ENCODE measurements at regions of chr4 and their contacts with region 1.

Region 1: DNA sequence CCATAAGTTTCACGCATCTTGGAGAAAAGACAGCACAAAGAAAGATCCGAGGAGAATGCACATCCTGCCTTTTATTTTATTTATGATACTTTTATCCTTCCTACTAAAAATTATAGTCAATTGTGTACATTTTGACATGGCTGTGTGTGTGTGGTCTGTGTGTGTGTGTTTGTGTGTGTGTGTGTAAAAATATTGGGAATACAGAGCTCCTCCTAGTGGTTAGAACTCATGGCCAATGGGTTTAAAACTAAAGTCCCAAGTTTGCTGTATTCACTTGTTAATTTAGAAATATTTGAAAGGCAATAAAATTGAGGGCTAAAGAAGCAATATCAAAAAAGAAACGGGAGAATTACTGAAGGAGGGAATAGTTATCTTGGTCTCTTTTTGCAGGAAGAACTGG is 47.5 kb downstream of the NKX6-1 start:
- DNase-seq: no peak
- ATAC-seq: peak; percentile 72
- H3K4me3 ChIP-seq: no peak overlapping the region
- H3K27ac ChIP-seq: no peak overlapping the region
- H3K4me1 ChIP-seq: no peaks in the 10 kb centered on the region
- H3K27me3 ChIP-seq: no peaks in the 10 kb centered on the region
- CTCF ChIP-seq: peak; percentile 33 to 71 (median 66); a peak in 5 of 6 replicates
- POLR2A ChIP-seq: no peak
- RAD21 ChIP-seq: peak; percentile 50

Region 2: GRCh38 chr4:84159762-84160161 is 291.8 kb before region 1 on chr4:
- CTCF ChIA-PET with region 1: no interaction called
- POLR2A ChIA-PET with region 1: no interaction called
- RAD21 ChIA-PET with region 1: no interaction called
- intact Hi-C with region 1: no loop called
- DNase-seq: peak; percentile 6
- ATAC-seq: peak; percentile 87
- H3K4me3 ChIP-seq: no peak overlapping the region
- H3K27ac ChIP-seq: no peak overlapping the region
- H3K4me1 ChIP-seq: no peaks in the 10 kb centered on the region
- H3K27me3 ChIP-seq: peaks cover 8% of the 10 kb centered on the region; the same call in 1 of the 2 replicates
- CTCF ChIP-seq: peak; percentile 8 to 50 (median 42); a peak in 4 of 6 replicates
- POLR2A ChIP-seq: no peak
- RAD21 ChIP-seq: peak; percentile 46

Region 3: DNA sequence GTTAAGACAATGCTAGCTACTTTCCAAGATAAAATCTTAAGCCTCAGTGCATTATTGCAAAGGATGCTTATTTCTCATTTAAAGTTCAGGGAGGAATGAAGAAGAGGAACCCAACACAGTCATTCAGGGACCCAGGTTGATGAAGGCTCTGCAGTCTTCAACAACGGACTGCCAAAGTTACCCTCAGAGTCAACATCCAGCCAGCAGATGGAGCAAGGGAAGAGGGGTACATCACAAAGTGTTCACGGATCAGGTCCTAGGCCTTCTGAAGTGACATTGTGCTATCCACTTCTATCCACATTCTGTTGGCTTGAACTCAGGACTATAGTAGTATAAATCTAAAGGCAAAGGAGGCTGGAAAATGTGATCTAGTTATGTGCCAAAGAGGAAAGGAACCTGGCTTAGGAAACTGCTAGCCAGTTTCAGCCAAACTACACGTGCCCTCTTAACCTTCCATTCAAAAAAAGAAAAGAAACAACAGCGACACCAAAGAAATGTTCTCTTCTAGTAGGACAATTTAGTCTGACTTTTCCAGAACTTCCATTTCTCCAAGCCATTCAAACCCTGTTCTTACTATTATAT is 18.7 kb after region 1 on chr4:
- CTCF ChIA-PET with region 1: interaction called, 10 read pairs
- POLR2A ChIA-PET with region 1: no interaction called
- RAD21 ChIA-PET with region 1: interaction called in 1 of 2 experiments, 3 read pairs
- intact Hi-C with region 1: no loop called
- DNase-seq: no peak
- ATAC-seq: peak; percentile 70
- H3K4me3 ChIP-seq: no peak overlapping the region
- H3K27ac ChIP-seq: no peak overlapping the region
- H3K4me1 ChIP-seq: no peaks in the 10 kb centered on the region
- H3K27me3 ChIP-seq: no peaks in the 10 kb centered on the region
- CTCF ChIP-seq: peak; percentile 24 to 48 (median 42); a peak in 4 of 6 replicates
- POLR2A ChIP-seq: no peak
- RAD21 ChIP-seq: 0 out of 2 replicates have a peak, but pooled peaks have one; percentile 25

Measured in HCT116 (cell line).